ENCODE measurements at regions of chr15 and their contacts with region 1.

Region 1: GRCh38 chr15:68304589-68305337 is 27.2 kb downstream of the FEM1B start:
- DNase-seq: no peak
- ATAC-seq: no peak
- H3K4me3 ChIP-seq: no peak overlapping the region
- H3K27ac ChIP-seq: no peak overlapping the region
- H3K4me1 ChIP-seq: peaks cover 5% of the 10 kb centered on the region
- H3K27me3 ChIP-seq: no peaks in the 10 kb centered on the region
- CTCF ChIP-seq: no peak

Region 2: DNA sequence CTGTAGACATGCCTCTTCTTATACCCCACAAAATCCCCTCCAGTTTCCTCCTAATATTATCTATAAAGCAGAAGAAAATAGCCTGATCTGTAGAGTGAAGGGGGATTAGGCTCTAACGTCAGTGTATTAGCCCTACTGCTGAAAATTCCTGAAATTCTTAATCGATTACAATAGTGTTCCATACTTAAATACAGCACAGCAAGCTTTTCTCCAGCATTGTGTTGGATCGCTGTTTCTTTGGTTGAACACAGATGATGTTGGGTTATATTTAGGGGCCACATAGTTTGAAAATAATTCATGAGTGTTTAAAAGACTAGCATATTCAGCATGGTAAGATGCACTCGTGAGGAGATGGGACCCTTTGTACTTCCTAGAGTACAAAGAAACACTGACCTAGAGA is 198.1 kb before region 1 on chr15:
- intact Hi-C with region 1: no loop called
- DNase-seq: no peak
- ATAC-seq: peak in 1 of 2 donors; percentile 18
- H3K4me3 ChIP-seq: no peak overlapping the region
- H3K27ac ChIP-seq: no peak overlapping the region
- H3K4me1 ChIP-seq: peaks cover 33% of the 10 kb centered on the region
- H3K27me3 ChIP-seq: no peaks in the 10 kb centered on the region
- CTCF ChIP-seq: no peak

Region 3: GRCh38 chr15:68372291-68372811 is 67.6 kb after region 1 on chr15:
- intact Hi-C with region 1: no loop called
- DNase-seq: no peak
- ATAC-seq: peak; percentile 47 to 57
- H3K4me3 ChIP-seq: no peak overlapping the region
- H3K27ac ChIP-seq: no peak overlapping the region
- H3K4me1 ChIP-seq: peaks cover 7% of the 10 kb centered on the region
- H3K27me3 ChIP-seq: no peaks in the 10 kb centered on the region
- CTCF ChIP-seq: peak; percentile 41

Region 4: GRCh38 chr15:68383161-68384074 is 78.7 kb after region 1 on chr15:
- intact Hi-C with region 1: loop called (anchors 10 kb)
- DNase-seq: no peak
- ATAC-seq: peak; percentile 54 to 81
- H3K4me3 ChIP-seq: no peak overlapping the region
- H3K27ac ChIP-seq: no peak overlapping the region
- H3K4me1 ChIP-seq: peaks cover 4% of the 10 kb centered on the region
- H3K27me3 ChIP-seq: peaks cover 2% of the 10 kb centered on the region
- CTCF ChIP-seq: peak; percentile 78